Right cardiac atrium (tissue), 5 donors: ENCODE measurements at regions of chr20 and their contacts with region 1.

Region 1: DNA sequence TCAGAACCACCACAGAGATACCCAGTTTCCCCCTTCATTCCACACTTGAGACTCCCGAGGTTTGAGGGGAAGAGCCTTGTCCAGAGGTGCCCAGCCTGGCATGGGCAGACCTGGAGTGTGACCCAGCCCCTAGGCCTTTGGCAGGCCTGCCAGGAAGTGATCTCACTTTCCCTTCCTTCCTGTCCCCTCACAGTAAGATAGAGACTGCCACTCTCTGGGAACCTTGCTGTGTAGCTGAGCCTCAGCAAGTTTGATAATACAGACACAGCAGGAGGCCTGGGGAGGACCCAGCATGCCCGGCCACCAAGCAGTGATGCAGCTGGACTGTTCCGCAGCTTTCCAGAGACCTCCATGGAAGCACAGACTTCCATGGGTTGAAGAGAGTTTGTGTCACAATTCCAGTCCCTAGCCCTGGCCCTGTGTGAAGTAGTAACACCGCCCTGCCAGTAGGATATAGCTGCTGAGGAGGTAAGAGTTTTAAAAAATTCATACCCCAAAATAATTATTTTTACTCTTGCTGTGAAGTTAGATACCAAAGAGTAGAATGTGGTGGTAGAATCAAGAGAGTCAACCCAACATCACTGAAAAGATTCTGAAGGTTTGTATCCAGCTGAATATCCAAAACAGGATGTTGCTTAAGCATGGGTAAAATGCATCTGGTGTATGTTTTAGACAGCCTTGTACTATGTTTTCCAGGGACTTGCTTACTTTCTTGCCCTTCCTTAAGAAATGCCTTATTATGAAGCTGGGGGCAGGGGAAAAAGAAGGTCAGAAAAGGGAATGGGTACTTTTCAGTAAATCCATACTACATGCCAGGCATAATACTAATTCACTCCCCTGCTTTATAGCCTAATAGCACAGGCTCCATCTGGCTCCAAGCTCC is 16.3 kb downstream of the PKIG start:
- DNase-seq: peak; percentile 64 to 83 (median 82)
- ATAC-seq: peak; percentile 67 to 81
- H3K4me3 ChIP-seq: peak overlapping the region; percentile 13
- H3K27ac ChIP-seq: peak overlapping the region; percentile 86
- H3K4me1 ChIP-seq: peaks cover 56% of the 10 kb centered on the region
- H3K27me3 ChIP-seq: no peaks in the 10 kb centered on the region

Region 2: DNA sequence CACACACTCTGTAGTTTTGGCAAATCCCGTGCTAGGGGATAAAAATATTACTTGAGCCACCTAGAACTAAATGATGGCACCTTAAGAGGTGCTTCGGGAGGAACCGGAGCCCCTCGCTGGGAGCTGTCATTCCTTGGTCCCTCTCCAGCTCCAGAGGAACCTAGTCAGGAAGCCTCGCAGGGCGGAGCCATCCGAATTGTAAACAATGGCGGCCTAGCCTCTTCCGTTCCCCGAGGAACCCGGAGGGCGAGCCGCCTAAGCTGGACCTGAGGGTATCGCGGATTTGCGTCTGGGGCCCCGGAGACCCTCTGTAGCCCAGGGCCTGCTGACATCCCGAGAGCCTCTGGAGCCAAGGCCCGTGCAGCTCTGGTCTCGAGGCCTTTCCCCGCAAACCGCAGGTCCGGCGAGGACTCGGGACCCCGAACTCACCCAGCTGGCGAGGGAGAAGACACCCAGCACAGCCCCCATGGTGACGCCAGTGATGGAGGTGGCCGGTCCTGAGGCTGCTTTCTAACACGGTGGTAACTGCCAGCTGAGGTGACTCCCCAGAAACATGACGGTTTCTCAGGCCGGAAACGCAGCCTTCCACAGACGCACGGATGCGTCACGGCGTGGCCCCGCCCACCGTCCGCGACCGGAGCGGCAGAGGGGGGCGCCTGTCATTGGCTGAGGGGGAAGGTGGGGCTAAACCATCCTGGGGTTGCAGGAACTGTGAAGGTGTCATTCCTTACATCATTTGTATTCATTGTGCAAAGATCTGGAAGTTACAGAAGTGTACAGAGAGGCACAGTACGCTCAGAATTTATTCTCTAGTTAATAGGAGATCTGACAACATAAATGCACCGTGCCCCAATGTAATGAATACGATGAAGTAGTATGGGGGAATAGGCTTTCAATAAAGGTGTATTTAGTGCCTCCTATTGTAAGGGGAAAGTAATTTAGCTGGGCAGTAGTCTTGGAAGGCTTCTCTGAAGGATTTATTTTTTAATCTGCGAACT is 76.9 kb before region 1 on chr20 and contains the start of gene SERINC3:
- intact Hi-C with region 1: loop called in 1 of 4 experiments (anchors 5 kb)
- DNase-seq: peak; percentile 96 to 98 (median 98)
- ATAC-seq: peak; percentile 99
- H3K4me3 ChIP-seq: peak within 1 kb of the TSS; percentile 90
- H3K27ac ChIP-seq: peak within 1 kb of the TSS; percentile 99
- H3K4me1 ChIP-seq: peaks cover 3% of the 10 kb centered on the region
- H3K27me3 ChIP-seq: no peaks in the 10 kb centered on the region
- total RNA-seq, gene SERINC3: 101 to 118 (median 105) TPM

Region 3: GRCh38 chr20:44532259-44532980 is 66.2 kb before region 1 on chr20:
- intact Hi-C with region 1: loop called in 2 of 4 experiments (anchors 5 to 10 kb)
- DNase-seq: peak in 1 of 3 donors; percentile 68
- ATAC-seq: peak in 1 of 2 donors; percentile 5
- H3K4me3 ChIP-seq: peak overlapping the region; percentile 91
- H3K27ac ChIP-seq: peak overlapping the region; percentile 49
- H3K4me1 ChIP-seq: peaks cover 5% of the 10 kb centered on the region
- H3K27me3 ChIP-seq: no peaks in the 10 kb centered on the region